Kidney (tissue), 22 donors: ENCODE measurements at regions of chr12 and their contacts with region 1.

Region 1: GRCh38 chr12:1795785-1796514 is 24.4 kb upstream of the LRTM2 start:
- DNase-seq: peak; percentile 88 to 98 (median 95)
- H3K4me3 ChIP-seq: peak overlapping the region; percentile 68 to 79 (median 74)
- H3K27ac ChIP-seq: peak overlapping the region; percentile 48 to 67
- H3K4me1 ChIP-seq: peaks cover 0 to 18% (median 4%) of the 10 kb centered on the region in 3 donors
- H3K27me3 ChIP-seq: no peaks in the 10 kb centered on the region
- CTCF ChIP-seq: peak; percentile 99

Region 2: DNA sequence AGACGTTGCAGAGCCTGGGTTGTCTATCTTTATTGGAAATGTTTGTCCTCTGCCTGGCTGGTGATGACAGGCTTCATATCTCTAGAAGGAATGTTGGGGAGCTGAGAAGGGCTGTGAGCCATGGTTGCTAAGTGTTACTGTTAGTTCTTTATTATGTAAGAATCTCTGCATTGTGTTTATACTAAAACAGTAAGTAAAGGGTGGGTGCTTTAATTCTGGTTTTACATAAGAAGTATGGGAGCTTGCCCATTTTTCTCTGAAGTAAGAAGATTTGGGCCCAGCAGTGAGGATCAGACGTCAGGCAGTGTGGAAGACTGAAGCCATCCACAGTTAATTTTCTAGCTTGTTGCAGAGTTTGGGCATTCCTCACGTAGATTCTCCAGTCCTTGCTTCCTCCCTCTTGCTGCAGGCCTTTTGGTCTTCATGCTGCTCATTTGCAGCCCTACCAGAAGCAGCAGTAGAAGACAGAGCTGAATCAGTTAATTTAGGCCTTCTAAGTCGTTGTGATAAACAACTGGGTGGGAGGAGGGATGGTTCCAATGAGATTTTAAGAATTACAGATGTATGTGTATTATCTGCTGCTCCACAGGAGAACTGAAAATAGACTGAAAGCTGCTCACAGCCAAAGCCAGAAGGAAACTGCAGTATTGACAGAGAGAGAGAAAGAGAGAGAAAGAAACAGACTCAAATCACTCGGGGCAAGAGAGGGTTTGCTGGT is 145.5 kb before region 1 on chr12:
- intact Hi-C with region 1: loop called (anchors 5 kb)
- DNase-seq: no peak
- H3K4me3 ChIP-seq: no peak overlapping the region
- H3K27ac ChIP-seq: no peak overlapping the region
- H3K4me1 ChIP-seq: no peaks in the 10 kb centered on the region
- H3K27me3 ChIP-seq: no peaks in the 10 kb centered on the region
- CTCF ChIP-seq: no peak

Region 3: DNA sequence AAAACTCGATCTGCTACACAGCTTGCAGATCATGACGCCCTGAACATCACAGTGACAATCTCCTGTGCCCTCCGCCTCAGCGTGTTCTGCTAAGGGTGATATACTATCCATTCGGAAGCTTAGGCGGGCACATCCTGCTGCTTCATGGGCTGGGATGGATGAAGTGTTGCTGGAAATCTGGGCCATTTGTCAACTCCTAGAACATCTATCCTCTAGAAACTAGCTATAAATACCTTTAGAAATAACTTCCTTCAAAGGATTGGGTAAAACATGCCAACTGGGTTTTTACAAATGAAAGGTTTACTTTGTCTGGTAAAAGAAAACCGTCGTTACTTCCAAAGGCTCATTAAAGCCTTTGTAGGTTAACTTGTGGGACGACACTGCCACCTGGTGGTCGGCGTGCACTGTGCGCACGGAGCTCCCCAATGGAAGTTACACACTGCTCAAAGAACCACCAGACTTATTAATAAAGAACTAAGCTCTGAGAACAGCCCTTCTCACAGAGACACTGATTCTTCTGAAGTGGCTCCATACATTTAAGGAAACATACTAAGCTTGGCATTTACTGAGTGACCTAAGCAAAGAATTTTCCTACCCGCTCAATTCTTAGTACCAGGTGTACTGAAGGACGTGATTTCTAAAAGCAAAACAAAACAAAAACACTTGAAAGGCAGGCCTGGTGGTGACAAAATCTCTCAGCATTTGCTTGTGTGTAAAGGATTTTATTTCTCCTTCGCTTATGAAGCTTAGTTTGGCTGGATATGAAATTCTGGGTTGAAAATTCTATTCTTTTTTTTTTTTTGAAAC is 144.1 kb after region 1 on chr12:
- intact Hi-C with region 1: loop called (anchors 10 kb)
- DNase-seq: peak; percentile 90 to 92 (median 92)
- H3K4me3 ChIP-seq: peak overlapping the region in 1 of 3 donors; percentile 2
- H3K27ac ChIP-seq: no peak overlapping the region
- H3K4me1 ChIP-seq: peaks cover 0 to 9% (median 5%) of the 10 kb centered on the region in 3 donors
- H3K27me3 ChIP-seq: no peaks in the 10 kb centered on the region
- CTCF ChIP-seq: peak; percentile 98